PC-3 (cell line): ENCODE measurements at regions of chr6 and their contacts with region 1.

Region 1: GRCh38 chr6:42901536-42901957 is 14.3 kb upstream of the PTCRA start:
- DNase-seq: peak; percentile 96
- ATAC-seq: peak; percentile 96
- H3K4me3 ChIP-seq: peak overlapping the region; percentile 55
- H3K27ac ChIP-seq: no peak overlapping the region
- H3K4me1 ChIP-seq: peaks cover 16% of the 10 kb centered on the region
- H3K27me3 ChIP-seq: no peaks in the 10 kb centered on the region
- CTCF ChIP-seq: peak; percentile 89

Region 2: DNA sequence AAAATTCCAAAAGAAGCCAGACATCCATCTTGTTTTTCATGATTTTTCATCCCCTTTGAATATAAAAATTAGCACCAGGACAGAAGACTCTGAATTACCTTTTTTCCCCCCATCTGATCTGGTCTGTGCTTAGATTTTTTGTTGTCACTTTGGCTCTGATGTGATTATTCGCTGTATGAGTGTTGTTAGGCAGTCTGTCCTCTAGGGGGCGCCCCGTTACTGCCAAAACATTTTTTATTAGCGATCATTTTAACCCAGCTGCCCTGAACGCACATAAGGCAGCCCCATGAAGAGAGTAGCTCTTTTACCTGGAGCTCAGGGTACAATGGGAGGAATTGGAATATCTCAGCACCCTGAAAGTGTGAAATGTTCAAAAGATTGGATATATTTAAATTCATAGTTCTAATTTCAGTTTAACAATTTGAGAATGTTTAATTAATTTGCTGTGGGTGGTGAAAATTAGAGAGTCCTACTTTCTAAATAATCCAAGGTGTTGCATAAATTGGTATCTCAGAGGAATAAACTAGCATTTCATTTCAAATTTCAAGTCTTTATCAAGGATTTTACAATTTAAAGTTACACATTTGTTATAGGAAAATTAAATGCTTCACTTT is 239.9 kb before region 1 on chr6:
- CTCF ChIA-PET with region 1: no interaction called
- POLR2A ChIA-PET with region 1: no interaction called
- intact Hi-C with region 1: loop called (anchors 1 kb)
- DNase-seq: peak; percentile 77
- ATAC-seq: peak; percentile 65
- H3K4me3 ChIP-seq: no peak overlapping the region
- H3K27ac ChIP-seq: no peak overlapping the region
- H3K4me1 ChIP-seq: no peaks in the 10 kb centered on the region
- H3K27me3 ChIP-seq: no peaks in the 10 kb centered on the region
- CTCF ChIP-seq: peak; percentile 95

Region 3: DNA sequence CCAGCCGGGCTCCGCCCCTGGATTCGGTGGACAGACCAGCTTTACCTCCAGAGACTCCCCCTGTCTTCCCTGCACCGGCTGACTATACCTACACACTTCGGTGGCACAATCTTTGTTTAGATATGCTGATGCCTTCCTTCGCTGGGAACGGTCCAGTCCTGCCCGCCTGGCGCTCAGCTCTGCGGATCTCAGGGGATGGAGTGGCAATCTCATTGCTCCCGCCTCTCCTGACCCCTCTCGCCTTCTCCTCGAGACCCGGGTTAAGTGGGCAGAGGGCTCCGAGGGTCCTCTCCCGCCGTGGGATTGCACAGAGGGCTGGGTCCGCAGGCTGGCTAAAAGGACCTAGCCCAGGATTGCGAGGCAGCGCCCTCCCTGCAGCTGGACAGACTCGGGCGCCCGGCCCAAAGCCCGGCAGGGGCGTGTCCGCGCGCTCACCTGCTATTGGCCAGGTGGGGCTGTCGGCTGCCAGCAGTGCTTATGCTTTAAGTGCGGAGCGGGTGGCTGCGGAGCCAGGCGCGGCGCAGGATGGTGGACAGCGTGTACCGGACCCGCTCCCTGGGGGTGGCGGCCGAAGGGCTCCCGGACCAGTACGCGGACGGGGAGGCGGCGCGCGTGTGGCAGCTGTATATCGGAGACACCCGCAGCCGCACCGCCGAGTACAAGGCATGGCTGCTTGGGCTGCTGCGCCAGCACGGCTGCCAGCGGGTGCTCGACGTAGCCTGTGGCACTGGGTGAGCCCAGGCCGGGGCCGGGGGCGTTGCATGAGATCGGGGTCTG is 58.9 kb after region 1 on chr6 and contains the start of gene GNMT:
- CTCF ChIA-PET with region 1: no interaction called
- POLR2A ChIA-PET with region 1: no interaction called
- intact Hi-C with region 1: loop called (anchors 1 kb)
- DNase-seq: peak; percentile 74
- ATAC-seq: peak; percentile 85
- H3K4me3 ChIP-seq: peak within 1 kb of the TSS; percentile 79
- H3K27ac ChIP-seq: no peak within 1 kb of the TSS
- H3K4me1 ChIP-seq: peaks cover 15% of the 10 kb centered on the region; the same call in 1 of the 2 replicates
- H3K27me3 ChIP-seq: no peaks in the 10 kb centered on the region
- CTCF ChIP-seq: no peak
- total RNA-seq, gene GNMT: 0.47 and 1.2 TPM in 2 replicates

Region 4: GRCh38 chr6:42973926-42974325 is 72.4 kb after region 1 on chr6:
- CTCF ChIA-PET with region 1: no interaction called
- POLR2A ChIA-PET with region 1: no interaction called
- intact Hi-C with region 1: no loop called
- DNase-seq: no peak
- ATAC-seq: no peak
- H3K4me3 ChIP-seq: no peak overlapping the region
- H3K27ac ChIP-seq: no peak overlapping the region
- H3K4me1 ChIP-seq: peaks cover 11% of the 10 kb centered on the region
- H3K27me3 ChIP-seq: no peaks in the 10 kb centered on the region
- CTCF ChIP-seq: no peak

Region 5: DNA sequence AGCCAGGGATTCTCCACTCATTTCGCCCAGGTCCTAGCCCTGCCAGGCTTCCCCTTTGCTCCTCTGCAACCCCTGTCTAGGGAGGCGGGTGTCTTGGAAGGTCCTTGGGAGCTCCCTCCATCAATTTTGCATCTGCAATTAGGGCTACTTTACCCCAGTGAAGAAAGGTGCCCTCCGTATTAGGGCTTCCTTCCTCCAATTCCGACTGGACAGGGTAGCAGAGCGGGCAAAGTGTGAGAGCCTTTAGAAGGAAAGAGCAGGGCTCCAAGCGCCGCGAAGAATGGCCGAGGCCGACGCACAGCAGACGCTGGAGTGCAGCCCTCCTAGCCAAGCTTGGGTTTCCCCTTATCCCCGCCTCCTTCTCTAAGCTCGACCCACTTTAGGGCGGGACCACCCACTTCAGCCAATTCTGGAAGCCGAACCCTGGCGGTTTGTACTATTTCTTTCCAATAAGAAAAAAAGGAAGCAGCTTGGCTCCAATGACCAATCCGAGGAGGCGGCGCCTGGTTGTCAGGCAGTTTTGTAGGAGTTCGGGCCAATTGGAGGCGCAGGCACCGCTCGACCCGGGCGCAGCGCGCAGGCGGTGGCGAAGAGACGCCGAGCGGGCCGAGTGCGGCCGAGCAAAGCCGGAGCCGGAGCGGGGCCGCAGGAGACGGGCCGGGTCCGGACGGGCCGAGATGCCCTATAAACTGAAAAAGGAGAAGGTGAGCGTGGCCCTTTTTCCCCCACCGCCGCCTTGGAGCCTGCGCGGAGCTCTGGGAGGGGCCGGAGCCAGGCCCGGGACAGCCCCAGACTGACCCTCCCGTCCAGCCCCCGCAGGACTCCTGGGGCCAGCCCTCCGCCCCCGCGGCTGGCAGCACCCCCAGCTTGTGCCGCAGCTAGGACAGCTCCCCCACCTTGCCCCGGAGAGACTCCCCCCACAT is 82.7 kb after region 1 on chr6 and contains the start of gene PPP2R5D:
- CTCF ChIA-PET with region 1: no interaction called
- POLR2A ChIA-PET with region 1: no interaction called
- intact Hi-C with region 1: loop called (anchors 5 kb)
- DNase-seq: peak; percentile 99
- ATAC-seq: peak; percentile 91
- H3K4me3 ChIP-seq: peak within 1 kb of the TSS; percentile 82
- H3K27ac ChIP-seq: peak within 1 kb of the TSS; percentile 12; the same call in 1 of the 2 replicates
- H3K4me1 ChIP-seq: peaks cover 32% of the 10 kb centered on the region
- H3K27me3 ChIP-seq: no peaks in the 10 kb centered on the region
- CTCF ChIP-seq: no peak
- total RNA-seq, gene PPP2R5D: 54.1 and 55.6 TPM in 2 replicates

Region 6: GRCh38 chr6:43143235-43144124 is 241.9 kb after region 1 on chr6:
- CTCF ChIA-PET with region 1: no interaction called
- POLR2A ChIA-PET with region 1: no interaction called
- intact Hi-C with region 1: loop called (anchors 2 kb)
- DNase-seq: peak; percentile 91
- ATAC-seq: peak; percentile 96
- H3K4me3 ChIP-seq: no peak overlapping the region
- H3K27ac ChIP-seq: no peak overlapping the region
- H3K4me1 ChIP-seq: peaks cover 24% of the 10 kb centered on the region
- H3K27me3 ChIP-seq: no peaks in the 10 kb centered on the region
- CTCF ChIP-seq: peak; percentile 95